Right cardiac atrium (tissue), 5 donors: ENCODE measurements at regions of chr12 and their contacts with region 1.

Region 1: DNA sequence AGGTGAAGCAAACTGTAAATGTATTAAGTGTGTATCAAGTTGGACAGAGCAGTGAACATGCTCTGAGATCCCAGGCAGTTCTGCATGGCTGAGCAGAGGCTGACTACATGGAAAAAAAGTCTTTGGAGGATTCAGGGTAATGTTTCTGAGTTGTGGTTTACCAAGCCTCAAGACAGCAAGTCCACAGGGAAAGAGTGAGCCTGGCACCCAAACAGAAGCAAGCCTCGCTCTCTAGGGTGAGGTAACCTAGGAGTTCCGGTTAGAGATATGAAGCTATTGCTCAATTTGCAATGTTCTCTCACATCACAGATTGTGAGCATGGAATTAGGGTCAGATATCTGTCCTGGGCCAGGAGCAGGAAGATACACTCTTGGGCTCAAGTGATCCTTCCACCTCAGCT is 158.6 kb downstream of the MON2 start:
- DNase-seq: peak in 2 of 3 donors; percentile 38 to 55
- ATAC-seq: peak; percentile 76 to 79
- H3K4me3 ChIP-seq: no peak overlapping the region
- H3K27ac ChIP-seq: no peak overlapping the region
- H3K4me1 ChIP-seq: no peaks in the 10 kb centered on the region
- H3K27me3 ChIP-seq: no peaks in the 10 kb centered on the region

Region 2: DNA sequence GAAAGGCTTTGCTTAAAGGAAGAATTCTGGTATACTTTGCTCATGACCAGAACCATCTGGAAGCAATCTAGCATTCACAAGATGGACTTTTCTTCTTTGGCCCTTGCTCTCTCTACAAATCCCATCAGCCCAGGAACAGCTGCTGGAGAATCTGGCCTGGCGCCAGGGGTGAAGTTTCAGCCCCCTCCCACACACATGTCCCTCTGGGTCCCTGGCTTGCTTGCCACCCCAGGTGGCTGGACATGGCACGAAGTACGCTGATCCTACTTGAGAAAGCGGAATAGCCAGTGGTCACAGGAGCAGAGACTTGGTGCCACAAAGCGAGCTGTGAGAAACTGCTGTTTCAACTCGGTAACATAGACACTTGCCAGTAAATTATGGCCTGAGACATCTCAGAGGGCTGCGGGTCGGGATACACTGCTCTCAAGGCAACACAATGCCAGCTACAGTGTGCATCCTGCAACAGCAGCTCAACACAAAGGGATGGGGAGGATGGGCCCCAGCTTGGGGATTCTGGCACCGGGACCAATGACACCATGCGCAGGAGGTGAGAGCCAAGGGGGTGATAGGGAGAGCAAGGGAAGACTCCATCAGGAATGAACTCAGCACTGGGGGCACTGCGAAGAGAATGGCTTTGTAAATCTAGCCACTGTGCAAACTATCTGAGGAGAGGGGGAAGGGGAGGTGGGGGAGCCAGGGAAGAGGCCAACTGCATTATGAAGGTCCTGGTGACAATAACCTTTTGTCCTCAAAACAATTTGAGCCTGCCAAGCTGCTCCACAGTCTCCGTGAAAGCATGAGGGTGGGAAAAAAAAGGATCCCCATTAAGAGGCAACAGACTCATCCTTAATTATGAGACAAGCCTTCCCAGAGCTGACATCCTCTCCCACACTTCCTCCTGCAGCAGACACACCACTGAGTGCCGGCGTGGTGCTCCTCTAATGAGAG is 89.8 kb after region 1 on chr12:
- intact Hi-C with region 1: loop called in 1 of 4 experiments (anchors 10 kb)
- DNase-seq: peak; percentile 46 to 81 (median 73)
- ATAC-seq: peak; percentile 55 to 64
- H3K4me3 ChIP-seq: no peak overlapping the region
- H3K27ac ChIP-seq: no peak overlapping the region
- H3K4me1 ChIP-seq: peaks cover 7% of the 10 kb centered on the region
- H3K27me3 ChIP-seq: no peaks in the 10 kb centered on the region